Endothelial cell of umbilical vein (primary cell): ENCODE measurements at regions of chr2 and their contacts with region 1.

Region 1: DNA sequence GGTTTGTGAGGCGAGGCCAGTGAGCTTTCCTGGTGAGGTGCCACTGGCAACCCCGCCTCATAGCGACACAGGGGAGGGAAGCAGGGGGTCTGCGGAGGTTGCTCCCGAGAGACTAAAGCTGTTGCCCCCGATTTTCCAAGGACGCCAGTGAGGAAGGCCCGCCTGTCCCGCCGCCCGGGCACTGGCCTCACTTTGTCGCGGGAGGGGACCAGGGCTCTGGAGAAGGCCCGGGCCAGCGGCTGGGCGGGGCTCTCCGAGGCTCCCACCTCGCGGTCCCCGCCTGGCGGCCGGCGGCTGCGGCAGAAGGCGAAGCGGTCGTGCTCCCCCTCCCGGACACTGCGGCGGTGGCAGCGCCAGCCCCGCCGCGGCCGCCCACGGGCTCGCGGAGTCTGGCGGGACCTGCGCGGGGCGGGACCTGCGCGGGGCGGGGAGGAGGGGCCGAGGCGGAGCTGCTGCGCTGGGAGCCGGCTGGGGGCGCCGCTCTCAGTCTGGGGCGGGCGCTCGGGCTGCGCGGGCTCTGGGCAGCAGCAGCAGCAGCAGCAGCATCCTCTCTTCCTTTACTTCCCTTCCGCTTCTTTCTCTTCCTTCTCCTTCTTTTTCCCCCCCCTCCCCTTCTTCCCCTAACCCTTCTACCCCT is at the start of gene MAP2:
- DNase-seq: peak; percentile 88
- H3K4me3 ChIP-seq: peak within 1 kb of the TSS; percentile 77 to 95 (median 85)
- H3K27ac ChIP-seq: peak within 1 kb of the TSS; percentile 51
- H3K4me1 ChIP-seq: peaks cover 12% of the 10 kb centered on the region
- H3K27me3 ChIP-seq: peaks cover 0 to 2% of the 10 kb centered on the region in 2 experiments
- CTCF ChIP-seq: peak; percentile 86 to 91
- POLR2A ChIP-seq: peak; percentile 33
- total RNA-seq, gene MAP2: 46.1 and 61.2 TPM in 2 replicates

Region 2: GRCh38 chr2:208466151-208466919 is 957.3 kb before region 1 on chr2:
- CTCF ChIA-PET with region 1: no interaction called
- POLR2A ChIA-PET with region 1: no interaction called
- dilution Hi-C with region 1: no loop called
- intact Hi-C with region 1: loop called (anchors 2 kb)
- DNase-seq: peak; percentile 3
- H3K4me3 ChIP-seq: no peak overlapping the region
- H3K27ac ChIP-seq: no peak overlapping the region
- H3K4me1 ChIP-seq: no peaks in the 10 kb centered on the region
- H3K27me3 ChIP-seq: no peaks in the 10 kb centered on the region
- CTCF ChIP-seq: peak; percentile 34 to 41
- POLR2A ChIP-seq: no peak

Region 3: GRCh38 chr2:209380293-209380692 is 43.4 kb before region 1 on chr2:
- CTCF ChIA-PET with region 1: interaction called, 11 read pairs
- POLR2A ChIA-PET with region 1: no interaction called
- dilution Hi-C with region 1: no loop called
- intact Hi-C with region 1: no loop called
- DNase-seq: no peak
- H3K4me3 ChIP-seq: no peak overlapping the region
- H3K27ac ChIP-seq: no peak overlapping the region
- H3K4me1 ChIP-seq: peaks cover 9% of the 10 kb centered on the region
- H3K27me3 ChIP-seq: no peaks in the 10 kb centered on the region
- CTCF ChIP-seq: no peak
- POLR2A ChIP-seq: no peak

Region 4: GRCh38 chr2:209519906-209520305 is 96.2 kb after region 1 on chr2:
- CTCF ChIA-PET with region 1: interaction called, 62 read pairs
- POLR2A ChIA-PET with region 1: no interaction called
- dilution Hi-C with region 1: no loop called
- intact Hi-C with region 1: no loop called
- DNase-seq: no peak
- H3K4me3 ChIP-seq: no peak overlapping the region
- H3K27ac ChIP-seq: no peak overlapping the region
- H3K4me1 ChIP-seq: peaks cover 13% of the 10 kb centered on the region
- H3K27me3 ChIP-seq: no peaks in the 10 kb centered on the region
- CTCF ChIP-seq: no peak
- POLR2A ChIP-seq: no peak

Region 5: DNA sequence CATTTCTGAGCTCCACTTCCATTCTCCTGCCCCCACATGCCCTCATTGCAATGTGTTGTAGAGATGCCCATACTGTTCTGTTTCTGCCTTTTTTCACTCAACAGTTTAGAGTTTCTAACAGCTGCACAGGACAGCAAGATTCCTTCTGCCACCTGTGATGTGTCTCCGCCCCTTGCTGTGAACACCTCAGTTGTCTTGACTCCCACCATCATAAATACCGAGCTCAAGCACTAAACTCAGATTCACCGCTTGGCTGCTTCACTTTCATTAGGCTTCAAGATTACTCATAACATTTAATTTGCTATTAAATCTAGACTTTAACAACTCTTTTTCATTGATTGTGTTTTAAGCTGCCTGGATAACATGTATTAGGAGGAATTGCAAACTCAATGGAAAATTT is 141.1 kb after region 1 on chr2:
- CTCF ChIA-PET with region 1: interaction called, 38 read pairs
- POLR2A ChIA-PET with region 1: no interaction called
- dilution Hi-C with region 1: no loop called
- intact Hi-C with region 1: no loop called
- DNase-seq: no peak
- H3K4me3 ChIP-seq: no peak overlapping the region
- H3K27ac ChIP-seq: no peak overlapping the region
- H3K4me1 ChIP-seq: no peaks in the 10 kb centered on the region
- H3K27me3 ChIP-seq: no peaks in the 10 kb centered on the region
- CTCF ChIP-seq: no peak
- POLR2A ChIP-seq: no peak

Region 6: GRCh38 chr2:210171309-210172203 is 747.9 kb after region 1 on chr2 and contains the start of gene KANSL1L:
- CTCF ChIA-PET with region 1: no interaction called
- POLR2A ChIA-PET with region 1: interaction called, 3 read pairs
- dilution Hi-C with region 1: no loop called
- intact Hi-C with region 1: loop called (anchors 2 kb)
- DNase-seq: peak; percentile 97
- H3K4me3 ChIP-seq: peak within 1 kb of the TSS; percentile 83 to 96 (median 92)
- H3K27ac ChIP-seq: peak within 1 kb of the TSS; percentile 87
- H3K4me1 ChIP-seq: peaks cover 12% of the 10 kb centered on the region
- H3K27me3 ChIP-seq: peaks cover 0 to 2% of the 10 kb centered on the region in 2 experiments
- CTCF ChIP-seq: no peak
- POLR2A ChIP-seq: peak; percentile 57
- total RNA-seq, gene KANSL1L: 13.4 and 14.0 TPM in 2 replicates